ENCODE measurements at regions of chr9 and their contacts with region 1.

Region 1: GRCh38 chr9:135343837-135344522 is 135.6 kb upstream of the PPP1R26 start:
- DNase-seq: peak; percentile 91
- ATAC-seq: peak; percentile 80
- H3K4me3 Mint-ChIP-seq: no peak overlapping the region
- H3K27ac Mint-ChIP-seq: no peak overlapping the region
- H3K4me1 Mint-ChIP-seq: peaks cover 34% of the 10 kb centered on the region
- H3K27me3 Mint-ChIP-seq: no peaks in the 10 kb centered on the region
- CTCF ChIP-seq: peak; percentile 90

Region 2: DNA sequence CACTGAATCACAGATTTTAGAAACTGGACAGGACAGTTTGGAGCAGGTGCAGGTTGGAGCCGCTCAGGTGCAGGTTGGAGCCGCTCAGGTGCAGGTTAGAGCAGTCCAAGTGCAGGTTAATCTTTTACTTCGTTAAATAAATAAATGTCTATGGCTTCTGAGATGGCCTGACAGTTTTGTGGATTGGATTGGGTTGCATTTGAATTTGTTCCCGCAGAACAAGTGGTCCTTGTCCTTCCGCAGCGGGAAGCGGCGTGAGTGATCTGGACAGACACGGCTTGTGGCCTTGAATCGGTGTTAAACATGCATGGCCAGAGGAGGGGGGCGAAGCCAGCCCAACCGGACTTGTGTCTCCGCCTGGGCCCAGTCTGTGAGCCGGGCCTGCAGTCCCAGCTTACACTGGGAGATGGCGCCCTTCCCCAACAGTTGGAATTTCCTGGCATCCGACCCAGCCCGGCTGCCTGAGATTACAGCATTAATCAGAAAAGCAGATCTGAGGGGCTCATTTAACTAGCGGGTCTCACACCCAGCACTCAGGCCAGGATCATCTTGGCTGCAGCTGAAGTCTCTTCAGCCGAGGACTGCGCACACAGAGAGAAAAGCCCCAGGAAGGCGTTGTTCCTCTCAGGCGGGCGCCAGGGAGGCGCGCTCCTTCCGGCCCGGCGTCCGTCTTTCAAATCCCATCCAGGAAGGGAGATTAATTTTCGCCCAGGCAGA is 258.0 kb before region 1 on chr9:
- CTCF ChIA-PET with region 1: interaction called, 11 read pairs
- POLR2A ChIA-PET with region 1: no interaction called
- DNase-seq: peak; percentile 92
- ATAC-seq: peak; percentile 62
- H3K4me3 Mint-ChIP-seq: peak overlapping the region; percentile 73
- H3K27ac Mint-ChIP-seq: no peak overlapping the region; the same call in 1 of the 2 replicates
- H3K4me1 Mint-ChIP-seq: peaks cover 24% of the 10 kb centered on the region
- H3K27me3 Mint-ChIP-seq: peaks cover 25% of the 10 kb centered on the region
- CTCF ChIP-seq: peak; percentile 84

Region 3: DNA sequence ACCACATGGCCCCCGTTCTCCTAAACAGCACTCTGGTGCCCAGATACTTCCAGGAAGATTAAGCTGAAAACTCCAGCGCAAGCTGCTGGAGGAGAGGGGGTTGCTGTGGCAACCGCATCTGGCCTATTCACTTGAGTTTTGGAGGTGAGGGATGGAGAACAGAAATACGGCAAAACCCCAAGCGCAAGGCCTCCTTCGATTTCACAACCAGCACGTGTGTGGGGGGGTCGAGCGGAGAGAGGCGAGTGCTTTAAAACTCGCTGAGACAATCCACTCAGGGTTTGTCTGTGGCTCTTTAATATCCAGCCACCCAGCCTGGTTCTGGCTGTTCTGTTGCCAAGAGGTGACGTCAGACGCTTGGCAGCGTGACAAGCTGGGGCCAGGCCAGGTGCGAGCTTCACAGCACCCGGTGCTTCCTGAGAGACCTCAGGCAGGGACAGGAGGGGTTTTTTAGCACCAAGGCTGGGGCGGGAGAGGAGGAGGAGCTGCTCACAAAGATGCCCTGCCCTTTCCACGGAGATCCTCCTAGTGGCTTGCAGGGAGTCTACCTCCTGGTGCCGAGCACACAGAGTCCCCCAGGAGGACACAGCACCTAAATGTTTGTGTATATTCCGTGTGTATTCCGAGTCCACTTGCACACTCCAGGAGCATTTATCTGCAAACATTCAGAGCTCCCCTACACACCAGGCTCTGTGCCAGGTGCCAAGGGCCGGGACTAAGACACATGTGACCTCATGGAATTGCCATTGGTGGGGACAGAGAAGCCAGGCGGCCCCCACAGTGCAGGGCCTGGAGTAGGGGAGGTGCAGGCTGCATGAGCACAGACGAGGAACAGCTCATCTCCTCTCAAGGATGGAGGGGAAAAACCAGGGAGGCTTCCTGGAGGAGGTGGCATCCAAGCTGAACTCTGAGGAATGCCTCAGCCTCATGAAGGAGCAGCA is 61.9 kb before region 1 on chr9:
- CTCF ChIA-PET with region 1: interaction called, 13 read pairs
- POLR2A ChIA-PET with region 1: no interaction called
- DNase-seq: no peak
- ATAC-seq: no peak
- H3K4me3 Mint-ChIP-seq: no peak overlapping the region
- H3K27ac Mint-ChIP-seq: no peak overlapping the region
- H3K4me1 Mint-ChIP-seq: no peaks in the 10 kb centered on the region
- H3K27me3 Mint-ChIP-seq: no peaks in the 10 kb centered on the region; the same call in 1 of the 2 replicates
- CTCF ChIP-seq: no peak

Region 4: GRCh38 chr9:135328485-135329417 is 15.2 kb before region 1 on chr9:
- CTCF ChIA-PET with region 1: no interaction called
- POLR2A ChIA-PET with region 1: no interaction called
- DNase-seq: peak; percentile 5
- ATAC-seq: no peak
- H3K4me3 Mint-ChIP-seq: no peak overlapping the region
- H3K27ac Mint-ChIP-seq: no peak overlapping the region
- H3K4me1 Mint-ChIP-seq: 0 out of 2 replicates have a peak, but pooled peaks cover 5% of the 10 kb centered on the region
- H3K27me3 Mint-ChIP-seq: no peaks in the 10 kb centered on the region
- CTCF ChIP-seq: no peak

Region 5: DNA sequence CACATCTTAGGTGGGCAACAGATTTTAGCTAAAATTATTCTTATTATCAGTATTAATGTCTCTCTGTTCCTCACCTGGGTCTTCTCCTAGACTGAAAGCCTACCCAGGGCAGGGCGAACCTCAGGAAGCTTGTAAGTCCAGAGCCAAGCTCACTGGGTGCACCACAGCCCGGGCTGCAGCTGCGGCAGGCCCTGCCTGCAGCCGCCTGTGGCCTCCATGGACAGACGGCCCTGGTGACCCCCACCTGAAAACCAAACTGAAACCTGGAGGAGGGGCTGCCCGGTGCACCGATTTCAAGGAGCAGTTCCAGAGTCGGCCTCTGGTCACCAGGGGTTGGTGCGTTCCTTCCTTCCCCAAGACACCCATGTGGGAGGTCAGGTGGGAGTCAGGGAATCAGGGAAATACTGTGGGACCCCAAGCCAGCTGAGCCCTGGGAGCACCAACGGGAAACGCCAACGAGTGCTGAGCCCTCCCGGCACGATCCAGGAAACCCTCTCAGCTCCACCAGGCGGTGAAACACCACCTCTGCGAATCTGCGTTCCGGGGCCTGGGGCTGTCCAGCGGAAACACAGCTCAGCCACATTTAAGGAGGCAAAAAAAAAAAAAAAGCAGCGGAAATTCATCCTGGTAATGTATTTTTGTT is 67.0 kb after region 1 on chr9:
- CTCF ChIA-PET with region 1: interaction called, 16 read pairs
- POLR2A ChIA-PET with region 1: no interaction called
- DNase-seq: peak; percentile 36
- ATAC-seq: peak; percentile 40
- H3K4me3 Mint-ChIP-seq: no peak overlapping the region
- H3K27ac Mint-ChIP-seq: no peak overlapping the region
- H3K4me1 Mint-ChIP-seq: no peaks in the 10 kb centered on the region
- H3K27me3 Mint-ChIP-seq: no peaks in the 10 kb centered on the region
- CTCF ChIP-seq: no peak

Measured in WTC11 (cell line).